Natural killer cell (primary cell): ENCODE measurements at regions of chr5 and their contacts with region 1.

Region 1: GRCh38 chr5:122774861-122775549 is at the start of gene SNX2:
- DNase-seq: peak; percentile 89 to 94
- ATAC-seq: peak; percentile 89 to 98 (median 93)
- H3K4me3 ChIP-seq: peak within 1 kb of the TSS; percentile 75
- H3K4me3 Mint-ChIP-seq: peak within 1 kb of the TSS; percentile 98
- H3K27ac ChIP-seq: peak within 1 kb of the TSS; percentile 95
- H3K27ac Mint-ChIP-seq: peak within 1 kb of the TSS; percentile 88 to 90
- H3K4me1 ChIP-seq: peaks cover 7% of the 10 kb centered on the region
- H3K4me1 Mint-ChIP-seq: peaks cover 32 to 35% of the 10 kb centered on the region in 2 donors
- H3K27me3 ChIP-seq: no peaks in the 10 kb centered on the region
- H3K27me3 Mint-ChIP-seq: peaks cover 11 to 19% of the 10 kb centered on the region in 2 donors
- CTCF ChIP-seq: no peak
- total RNA-seq, gene SNX2: 47.9 to 57.4 (median 53.2) TPM

Region 2: DNA sequence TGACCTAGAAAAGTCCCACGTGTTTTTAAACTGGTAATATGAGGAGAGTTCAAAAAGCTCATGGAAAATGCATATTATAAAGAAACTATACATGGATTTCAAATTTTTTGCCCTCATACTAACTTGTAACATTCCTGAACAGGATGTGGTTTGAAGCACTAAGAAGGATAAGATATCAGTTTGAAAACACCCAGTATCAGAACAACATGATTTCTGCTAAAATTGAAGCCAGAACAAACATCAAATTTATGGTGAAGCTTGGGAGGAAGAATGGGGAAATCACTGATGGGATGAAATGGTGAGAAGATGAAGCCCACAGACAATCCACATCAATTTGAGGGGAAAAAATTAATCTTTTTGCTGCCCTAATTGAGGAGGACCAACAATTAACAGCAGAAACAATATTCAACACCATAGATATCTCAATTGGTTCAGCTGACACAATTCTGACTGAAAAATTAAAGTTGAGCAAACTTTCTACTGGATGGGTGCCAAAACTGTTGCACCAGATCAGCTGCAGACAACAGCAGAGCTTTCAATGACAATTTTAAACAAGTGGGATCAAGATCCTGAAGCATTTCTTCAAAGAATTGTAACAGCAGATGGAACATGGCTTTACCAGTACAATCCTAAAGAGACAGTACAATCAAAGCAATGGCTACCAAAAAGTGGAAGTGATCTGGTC is 113.4 kb before region 1 on chr5:
- intact Hi-C with region 1: no loop called
- DNase-seq: no peak
- ATAC-seq: no peak
- H3K4me3 ChIP-seq: no peak overlapping the region
- H3K4me3 Mint-ChIP-seq: no peak overlapping the region
- H3K27ac ChIP-seq: no peak overlapping the region
- H3K27ac Mint-ChIP-seq: no peak overlapping the region
- H3K4me1 ChIP-seq: no peaks in the 10 kb centered on the region
- H3K4me1 Mint-ChIP-seq: no peaks in the 10 kb centered on the region
- H3K27me3 ChIP-seq: no peaks in the 10 kb centered on the region
- H3K27me3 Mint-ChIP-seq: no peaks in the 10 kb centered on the region
- CTCF ChIP-seq: no peak

Region 3: DNA sequence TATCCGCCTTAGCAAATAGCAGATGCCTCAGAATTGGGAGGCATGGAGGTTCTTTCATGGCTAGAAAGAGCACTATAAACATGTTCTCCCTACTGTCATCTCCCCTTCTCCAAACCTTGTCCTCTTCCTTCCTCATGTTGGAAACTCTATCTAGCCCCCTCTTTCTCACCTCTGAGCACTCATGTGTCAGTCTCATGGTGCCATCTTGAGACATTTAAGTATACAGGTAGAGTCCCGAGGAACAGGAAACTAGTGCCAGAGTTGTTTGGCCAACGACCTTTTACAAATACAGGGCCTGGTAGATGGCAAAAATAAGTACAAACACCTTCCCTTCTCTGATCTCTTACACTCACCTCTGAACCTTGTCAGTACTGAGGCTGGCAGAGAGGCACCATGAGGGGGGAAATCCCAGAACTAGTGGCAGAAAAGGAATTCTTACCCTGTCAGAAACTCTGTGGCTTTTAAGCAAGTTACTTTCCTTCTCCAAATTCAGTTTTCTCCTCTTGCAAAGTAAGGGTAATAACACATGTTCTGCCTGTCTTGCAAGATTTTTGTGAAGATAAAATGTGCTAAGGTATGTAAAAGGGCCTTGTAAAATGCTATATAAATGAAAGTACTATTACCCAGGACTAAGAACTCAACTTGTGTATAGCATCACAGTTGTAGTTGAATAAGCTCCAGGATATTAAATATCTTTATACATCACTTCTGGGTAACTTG is 94.2 kb before region 1 on chr5:
- intact Hi-C with region 1: no loop called
- DNase-seq: no peak
- ATAC-seq: no peak
- H3K4me3 ChIP-seq: no peak overlapping the region
- H3K4me3 Mint-ChIP-seq: no peak overlapping the region
- H3K27ac ChIP-seq: no peak overlapping the region
- H3K27ac Mint-ChIP-seq: no peak overlapping the region
- H3K4me1 ChIP-seq: no peaks in the 10 kb centered on the region
- H3K4me1 Mint-ChIP-seq: no peaks in the 10 kb centered on the region
- H3K27me3 ChIP-seq: no peaks in the 10 kb centered on the region
- H3K27me3 Mint-ChIP-seq: peaks cover 0 to 2% of the 10 kb centered on the region in 2 donors
- CTCF ChIP-seq: no peak

Region 4: DNA sequence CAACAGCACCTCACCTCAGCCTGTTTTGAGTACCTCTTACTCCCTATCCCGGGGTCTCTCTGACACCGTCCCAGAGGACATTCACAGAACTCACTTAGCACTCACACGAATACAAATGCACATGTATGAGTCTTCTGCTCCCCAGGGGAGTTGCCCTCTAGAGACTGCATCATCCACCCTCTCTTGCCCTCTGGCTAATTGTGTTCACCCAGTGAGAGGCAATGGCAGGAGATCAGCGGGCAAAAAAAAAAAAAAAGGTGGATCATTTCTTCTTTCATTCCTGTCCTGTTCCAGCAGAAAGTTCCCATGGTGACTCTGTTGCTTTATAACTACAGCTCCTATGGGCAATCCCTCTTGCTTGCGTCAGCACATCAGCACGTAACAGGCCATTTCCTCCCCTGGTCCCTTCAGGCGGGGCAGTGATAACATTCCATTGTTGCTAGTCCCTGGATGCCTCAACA is 23.7 kb before region 1 on chr5:
- intact Hi-C with region 1: no loop called
- DNase-seq: no peak
- ATAC-seq: no peak
- H3K4me3 ChIP-seq: no peak overlapping the region
- H3K4me3 Mint-ChIP-seq: no peak overlapping the region
- H3K27ac ChIP-seq: no peak overlapping the region
- H3K27ac Mint-ChIP-seq: no peak overlapping the region
- H3K4me1 ChIP-seq: no peaks in the 10 kb centered on the region
- H3K4me1 Mint-ChIP-seq: no peaks in the 10 kb centered on the region
- H3K27me3 ChIP-seq: peaks cover 2% of the 10 kb centered on the region
- H3K27me3 Mint-ChIP-seq: peaks cover 4 to 13% of the 10 kb centered on the region in 2 donors
- CTCF ChIP-seq: no peak

Region 5: DNA sequence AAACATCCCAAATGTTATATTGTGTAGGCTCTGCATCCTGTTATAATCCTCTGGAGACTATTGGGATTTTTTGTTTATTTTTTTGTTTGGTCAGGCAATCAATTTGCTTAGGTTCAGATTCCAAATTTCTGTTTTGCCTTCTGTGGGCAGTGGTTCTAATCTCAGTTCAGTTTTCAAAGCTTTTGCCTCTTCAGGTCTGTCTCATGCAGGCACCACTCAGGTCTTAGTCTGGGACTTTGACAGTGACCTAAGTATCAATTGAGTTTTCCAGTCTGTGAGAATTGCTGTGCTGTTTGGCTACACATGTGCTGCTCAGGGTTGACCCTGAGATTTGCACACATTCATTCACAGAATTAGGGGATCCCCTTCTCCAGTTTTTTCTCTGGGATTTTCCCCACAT is 14.0 kb after region 1 on chr5:
- intact Hi-C with region 1: no loop called
- DNase-seq: no peak
- ATAC-seq: no peak
- H3K4me3 ChIP-seq: no peak overlapping the region
- H3K4me3 Mint-ChIP-seq: no peak overlapping the region
- H3K27ac ChIP-seq: no peak overlapping the region
- H3K27ac Mint-ChIP-seq: no peak overlapping the region
- H3K4me1 ChIP-seq: no peaks in the 10 kb centered on the region
- H3K4me1 Mint-ChIP-seq: peaks cover 31 to 38% of the 10 kb centered on the region in 2 donors
- H3K27me3 ChIP-seq: no peaks in the 10 kb centered on the region
- H3K27me3 Mint-ChIP-seq: no peaks in the 10 kb centered on the region
- CTCF ChIP-seq: no peak

Region 6: DNA sequence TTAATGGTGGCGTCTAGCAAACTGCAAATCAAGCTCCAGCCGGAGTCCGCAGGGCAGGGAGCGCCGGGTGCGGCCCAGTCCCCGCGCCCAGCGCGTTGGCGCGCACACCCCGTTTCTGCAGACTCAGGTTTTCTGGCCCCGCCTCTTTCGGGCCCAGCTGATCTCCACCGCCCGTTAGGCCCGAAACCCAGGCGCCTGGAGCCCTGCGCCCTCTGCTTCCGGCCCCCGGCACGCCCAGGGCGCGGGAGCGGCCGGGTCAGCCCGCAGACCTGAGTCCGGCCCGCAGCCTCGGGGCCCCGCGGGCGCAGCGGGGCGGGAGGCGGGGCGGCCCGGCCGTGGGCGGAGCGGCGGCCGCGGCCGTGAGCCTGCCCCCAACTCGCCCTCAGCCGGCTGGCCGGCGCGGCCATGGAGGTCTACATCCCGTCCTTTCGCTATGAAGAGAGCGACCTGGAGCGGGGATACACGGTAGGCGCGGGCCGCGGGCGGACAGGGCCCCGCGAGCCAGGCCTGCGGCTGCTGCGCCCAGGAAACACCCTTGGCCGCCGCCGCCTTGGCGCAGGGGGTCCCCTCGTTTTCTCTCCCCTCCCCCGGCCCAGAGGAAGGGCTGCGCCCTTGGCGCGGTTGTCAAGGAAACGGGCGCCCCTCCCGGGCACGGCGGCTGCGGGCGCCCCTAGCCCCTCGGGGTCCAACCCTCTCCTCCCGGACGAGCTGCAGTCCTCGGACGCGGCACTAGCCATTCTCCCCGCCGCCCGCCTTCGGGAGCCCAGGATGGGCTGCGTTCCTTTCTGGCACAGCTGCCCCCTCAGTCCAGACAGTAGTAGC is 70.4 kb after region 1 on chr5 and contains the start of gene SNX24:
- intact Hi-C with region 1: loop called (anchors 1 kb)
- DNase-seq: peak; percentile 68 to 84
- ATAC-seq: peak; percentile 83 to 89 (median 87)
- H3K4me3 ChIP-seq: peak within 1 kb of the TSS; percentile 70
- H3K4me3 Mint-ChIP-seq: peak within 1 kb of the TSS; percentile 93
- H3K27ac ChIP-seq: peak within 1 kb of the TSS; percentile 75
- H3K27ac Mint-ChIP-seq: peak within 1 kb of the TSS; percentile 81
- H3K4me1 ChIP-seq: peaks cover 20% of the 10 kb centered on the region
- H3K4me1 Mint-ChIP-seq: peaks cover 13 to 29% of the 10 kb centered on the region in 2 donors
- H3K27me3 ChIP-seq: no peaks in the 10 kb centered on the region
- H3K27me3 Mint-ChIP-seq: peaks cover 0 to 4% of the 10 kb centered on the region in 2 donors
- CTCF ChIP-seq: no peak
- total RNA-seq, gene SNX24: 3.6 to 5.2 (median 3.7) TPM